ENCODE measurements at regions of chr10 and their contacts with region 1.

Region 1: GRCh38 chr10:93816123-93816747 is 58.5 kb downstream of the LGI1 start:
- DNase-seq: peak in 1 of 2 donors; percentile 14
- ATAC-seq: peak; percentile 69 to 70
- H3K4me3 ChIP-seq: peak overlapping the region in 1 of 4 donors; percentile 9
- H3K27ac ChIP-seq: no peak overlapping the region
- H3K4me1 ChIP-seq: peaks cover 3 to 8% of the 10 kb centered on the region in 2 donors
- H3K27me3 ChIP-seq: no peaks in the 10 kb centered on the region
- CTCF ChIP-seq: peak in 4 of 5 experiments; percentile 6 to 68 (median 54)
- POLR2A ChIP-seq: no peak

Region 2: DNA sequence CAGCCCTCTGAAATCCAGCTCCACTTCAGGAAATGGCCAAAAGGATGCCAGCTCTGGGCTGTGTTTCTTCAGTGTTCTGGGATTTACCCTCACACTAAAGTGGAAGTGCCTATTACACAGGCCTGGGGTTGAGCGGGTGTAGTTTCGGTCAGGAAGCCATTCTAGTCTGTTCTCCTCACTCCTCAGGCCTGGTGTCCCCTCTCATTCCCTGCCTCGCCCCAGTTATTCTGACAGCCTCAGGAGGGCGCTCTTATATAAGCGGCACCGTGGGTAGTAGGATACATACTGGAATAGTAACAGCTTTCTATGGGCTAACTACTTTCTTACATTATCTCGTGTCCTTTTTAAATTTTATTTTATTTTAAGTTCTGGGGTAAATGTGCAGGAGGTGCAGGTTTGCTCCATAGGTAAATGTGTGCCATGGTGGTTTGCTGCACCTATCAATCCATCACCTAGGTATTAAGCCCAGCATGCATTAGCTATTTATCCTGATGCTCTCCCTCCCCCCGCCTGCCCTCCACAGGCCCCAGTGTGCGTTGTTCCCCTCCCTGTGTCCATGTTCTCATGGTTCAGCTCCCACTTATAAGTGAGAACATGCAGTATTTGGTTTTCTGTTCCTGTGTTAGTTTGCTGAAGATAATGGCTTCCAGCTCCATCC is 70.7 kb before region 1 on chr10:
- in situ Hi-C with region 1: no loop called
- intact Hi-C with region 1: loop called (anchors 2 kb)
- DNase-seq: no peak
- ATAC-seq: peak in 1 of 2 donors; percentile 62
- H3K4me3 ChIP-seq: no peak overlapping the region
- H3K27ac ChIP-seq: no peak overlapping the region
- H3K4me1 ChIP-seq: no peaks in the 10 kb centered on the region
- H3K27me3 ChIP-seq: no peaks in the 10 kb centered on the region
- CTCF ChIP-seq: peak in 2 of 5 experiments; percentile 35
- POLR2A ChIP-seq: no peak

Region 3: DNA sequence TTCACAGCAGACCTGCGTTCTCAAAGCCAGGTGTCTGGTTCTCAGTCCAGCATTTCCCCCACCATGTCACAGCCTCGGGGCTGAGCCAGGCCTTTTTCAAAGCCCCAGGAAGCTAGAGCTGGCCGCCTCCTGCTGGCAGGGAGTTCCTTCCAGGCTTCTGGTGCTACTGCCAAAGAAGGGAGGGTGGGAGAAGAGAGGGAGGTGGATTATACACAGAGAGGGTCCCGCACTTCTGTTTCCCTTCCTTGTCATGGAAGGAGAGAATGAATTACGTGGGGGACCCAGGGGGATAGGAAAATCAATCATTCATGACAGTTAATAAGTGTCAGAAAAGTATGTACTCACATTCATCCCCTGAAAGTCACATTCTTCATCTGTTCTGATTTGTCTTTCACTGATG is 59.1 kb before region 1 on chr10:
- in situ Hi-C with region 1: no loop called
- intact Hi-C with region 1: loop called (anchors 5 kb)
- DNase-seq: peak in 1 of 2 donors; percentile 16
- ATAC-seq: no peak
- H3K4me3 ChIP-seq: peak overlapping the region in 2 of 4 donors; percentile 36 to 47
- H3K27ac ChIP-seq: peak overlapping the region in 3 of 4 donors; percentile 53 to 76 (median 76)
- H3K4me1 ChIP-seq: peaks cover 0 to 22% of the 10 kb centered on the region in 2 donors
- H3K27me3 ChIP-seq: no peaks in the 10 kb centered on the region
- CTCF ChIP-seq: peak in 1 of 5 experiments; percentile 9
- POLR2A ChIP-seq: no peak

Region 4: GRCh38 chr10:93873427-93874115 is 57.3 kb after region 1 on chr10:
- in situ Hi-C with region 1: no loop called
- intact Hi-C with region 1: no loop called
- DNase-seq: no peak
- ATAC-seq: no peak
- H3K4me3 ChIP-seq: no peak overlapping the region
- H3K27ac ChIP-seq: no peak overlapping the region
- H3K4me1 ChIP-seq: no peaks in the 10 kb centered on the region
- H3K27me3 ChIP-seq: no peaks in the 10 kb centered on the region
- CTCF ChIP-seq: no peak
- POLR2A ChIP-seq: no peak